ENCODE measurements at regions of chr1 and their contacts with region 1.

Region 1: GRCh38 chr1:45339789-45340570 is at the starts of genes MUTYH and TOE1:
- DNase-seq: peak; percentile 84 to 95 (median 89)
- ATAC-seq: peak; percentile 91
- H3K4me3 ChIP-seq: peak within 1 kb of the TSS; percentile 83
- H3K4me3 Mint-ChIP-seq: peak within 1 kb of the TSS; percentile 95 to 100 (median 99)
- H3K27ac ChIP-seq: peak within 1 kb of the TSS; percentile 99
- H3K27ac Mint-ChIP-seq: peak within 1 kb of the TSS; percentile 96 to 99 (median 99)
- H3K4me1 ChIP-seq: peaks cover 31 to 33% of the 10 kb centered on the region in 2 donors
- H3K4me1 Mint-ChIP-seq: peaks cover 24 to 75% (median 61%) of the 10 kb centered on the region in 7 donors
- H3K27me3 ChIP-seq: no peaks in the 10 kb centered on the region
- H3K27me3 Mint-ChIP-seq: no peaks in the 10 kb centered on the region
- total RNA-seq, gene MUTYH: 56.7 to 85.4 (median 67.7) TPM
- total RNA-seq, gene TOE1: 20.6 to 53.3 (median 25.7) TPM

Region 2: DNA sequence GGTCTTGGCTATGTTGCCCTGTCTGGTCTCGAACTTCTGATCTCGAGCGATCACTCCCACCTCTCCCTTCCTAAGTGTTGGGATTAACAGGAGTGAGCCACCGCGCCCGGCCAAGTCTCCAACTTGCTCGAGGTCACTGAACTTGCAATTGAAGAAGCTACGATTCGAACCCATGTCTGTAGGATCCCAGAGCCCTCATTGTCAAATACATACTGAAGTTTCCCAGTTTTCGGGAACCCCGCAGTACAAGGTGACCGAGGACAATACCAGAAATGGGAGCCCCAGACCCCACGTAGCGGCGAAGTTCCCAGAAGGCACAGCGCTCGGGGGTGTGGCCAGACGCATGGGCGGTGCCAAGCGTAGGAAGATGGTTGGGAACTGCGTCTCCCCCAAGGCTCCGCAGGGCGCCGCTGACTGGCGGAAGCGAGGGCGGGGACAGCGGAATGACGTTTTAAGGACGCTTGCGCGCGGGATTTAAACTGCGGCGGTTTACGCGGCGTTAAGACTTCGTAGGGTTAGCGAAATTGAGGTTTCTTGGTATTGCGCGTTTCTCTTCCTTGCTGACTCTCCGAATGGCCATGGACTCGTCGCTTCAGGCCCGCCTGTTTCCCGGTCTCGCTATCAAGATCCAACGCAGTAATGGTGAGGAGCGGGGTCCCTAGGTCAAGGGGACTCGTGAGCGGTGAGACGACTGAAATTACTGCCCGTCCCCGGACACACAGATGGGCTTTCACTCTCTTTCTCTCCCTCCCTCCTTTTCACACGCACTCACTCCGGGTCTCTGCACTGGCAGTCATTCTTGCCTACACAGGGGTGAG is 600.4 kb before region 1 on chr1 and contains the start of gene KIF2C:
- CTCF ChIA-PET with region 1: no interaction called
- POLR2A ChIA-PET with region 1: no interaction called
- intact Hi-C with region 1: loop called (anchors 1 kb)
- DNase-seq: peak; percentile 87 to 96 (median 94)
- ATAC-seq: peak; percentile 100
- H3K4me3 ChIP-seq: peak within 1 kb of the TSS; percentile 79
- H3K4me3 Mint-ChIP-seq: peak within 1 kb of the TSS; percentile 84 to 99 (median 94)
- H3K27ac ChIP-seq: peak within 1 kb of the TSS; percentile 84
- H3K27ac Mint-ChIP-seq: peak within 1 kb of the TSS; percentile 86 to 97 (median 95)
- H3K4me1 ChIP-seq: peaks cover 5 to 7% of the 10 kb centered on the region in 2 donors
- H3K4me1 Mint-ChIP-seq: peaks cover 9 to 39% (median 19%) of the 10 kb centered on the region in 7 donors
- H3K27me3 ChIP-seq: no peaks in the 10 kb centered on the region
- H3K27me3 Mint-ChIP-seq: no peaks in the 10 kb centered on the region
- total RNA-seq, gene KIF2C: 0.32 to 69.3 (median 1.1) TPM

Region 3: DNA sequence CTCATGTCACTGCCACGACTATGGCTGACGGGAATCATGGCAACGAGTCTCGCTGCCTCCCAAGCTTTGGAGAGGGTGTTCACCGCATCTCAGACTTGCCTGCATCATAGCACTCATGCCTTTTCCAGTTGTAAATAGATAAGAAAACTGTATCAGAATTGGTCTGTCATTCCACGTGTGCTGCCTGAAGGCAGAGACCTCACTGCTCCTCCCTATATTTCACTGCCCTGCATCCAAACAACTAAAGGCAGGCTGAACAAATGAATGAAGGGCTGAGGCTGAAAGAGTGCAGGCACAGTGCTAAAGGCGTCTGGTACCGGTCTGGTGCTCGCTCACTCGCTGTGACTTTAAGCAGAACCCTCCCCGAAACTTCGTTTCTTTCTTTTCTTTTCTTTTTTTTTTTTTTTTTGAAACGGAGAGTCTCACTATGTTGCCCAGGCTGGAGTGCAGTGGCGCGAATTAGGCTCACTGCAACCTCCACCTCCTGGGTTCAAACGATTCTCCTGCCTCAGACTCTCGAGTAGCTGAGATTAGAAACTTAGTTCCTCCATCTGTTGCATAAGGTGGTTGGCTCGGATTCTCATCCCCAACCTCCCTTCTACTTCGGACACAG is 354.1 kb before region 1 on chr1:
- CTCF ChIA-PET with region 1: interaction called, 5 read pairs
- POLR2A ChIA-PET with region 1: interaction called, 6 read pairs
- intact Hi-C with region 1: loop called in 1 of 2 experiments (anchors 1 kb)
- DNase-seq: no peak
- ATAC-seq: no peak
- H3K4me3 ChIP-seq: peak overlapping the region; percentile 77
- H3K4me3 Mint-ChIP-seq: peak overlapping the region; percentile 90 to 100 (median 98)
- H3K27ac ChIP-seq: peak overlapping the region; percentile 68
- H3K27ac Mint-ChIP-seq: peak overlapping the region; percentile 75 to 99 (median 92)
- H3K4me1 ChIP-seq: peaks cover 8 to 13% of the 10 kb centered on the region in 2 donors
- H3K4me1 Mint-ChIP-seq: peaks cover 7 to 39% (median 23%) of the 10 kb centered on the region in 7 donors
- H3K27me3 ChIP-seq: no peaks in the 10 kb centered on the region
- H3K27me3 Mint-ChIP-seq: no peaks in the 10 kb centered on the region

Region 4: DNA sequence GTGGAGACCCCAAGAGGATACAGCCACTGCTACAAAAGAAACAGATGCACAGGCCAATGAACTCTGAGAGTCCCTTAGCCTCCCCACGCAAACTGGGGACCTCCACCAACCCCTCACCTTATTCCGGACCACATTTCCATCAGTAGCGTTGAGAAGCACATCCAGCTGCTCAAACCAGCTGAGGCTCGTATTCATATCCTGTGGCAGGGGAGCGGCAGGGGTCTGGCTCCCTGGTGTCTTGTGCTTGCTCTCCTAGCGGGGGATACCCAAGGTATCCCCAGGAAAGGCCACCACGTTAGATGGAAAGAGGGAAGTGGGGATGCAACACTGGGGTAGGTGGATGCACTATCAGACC is 159.4 kb after region 1 on chr1:
- CTCF ChIA-PET with region 1: interaction called, 26 read pairs
- POLR2A ChIA-PET with region 1: interaction called, 45 read pairs
- intact Hi-C with region 1: loop called (anchors 1 kb)
- DNase-seq: peak in 1 of 9 donors; percentile 17
- ATAC-seq: no peak
- H3K4me3 ChIP-seq: peak overlapping the region; percentile 68
- H3K4me3 Mint-ChIP-seq: peak overlapping the region; percentile 91 to 99 (median 94)
- H3K27ac ChIP-seq: peak overlapping the region; percentile 70
- H3K27ac Mint-ChIP-seq: peak overlapping the region; percentile 87 to 97 (median 92)
- H3K4me1 ChIP-seq: peaks cover 5 to 17% of the 10 kb centered on the region in 2 donors
- H3K4me1 Mint-ChIP-seq: peaks cover 24 to 38% (median 33%) of the 10 kb centered on the region in 7 donors
- H3K27me3 ChIP-seq: no peaks in the 10 kb centered on the region
- H3K27me3 Mint-ChIP-seq: no peaks in the 10 kb centered on the region

Region 5: DNA sequence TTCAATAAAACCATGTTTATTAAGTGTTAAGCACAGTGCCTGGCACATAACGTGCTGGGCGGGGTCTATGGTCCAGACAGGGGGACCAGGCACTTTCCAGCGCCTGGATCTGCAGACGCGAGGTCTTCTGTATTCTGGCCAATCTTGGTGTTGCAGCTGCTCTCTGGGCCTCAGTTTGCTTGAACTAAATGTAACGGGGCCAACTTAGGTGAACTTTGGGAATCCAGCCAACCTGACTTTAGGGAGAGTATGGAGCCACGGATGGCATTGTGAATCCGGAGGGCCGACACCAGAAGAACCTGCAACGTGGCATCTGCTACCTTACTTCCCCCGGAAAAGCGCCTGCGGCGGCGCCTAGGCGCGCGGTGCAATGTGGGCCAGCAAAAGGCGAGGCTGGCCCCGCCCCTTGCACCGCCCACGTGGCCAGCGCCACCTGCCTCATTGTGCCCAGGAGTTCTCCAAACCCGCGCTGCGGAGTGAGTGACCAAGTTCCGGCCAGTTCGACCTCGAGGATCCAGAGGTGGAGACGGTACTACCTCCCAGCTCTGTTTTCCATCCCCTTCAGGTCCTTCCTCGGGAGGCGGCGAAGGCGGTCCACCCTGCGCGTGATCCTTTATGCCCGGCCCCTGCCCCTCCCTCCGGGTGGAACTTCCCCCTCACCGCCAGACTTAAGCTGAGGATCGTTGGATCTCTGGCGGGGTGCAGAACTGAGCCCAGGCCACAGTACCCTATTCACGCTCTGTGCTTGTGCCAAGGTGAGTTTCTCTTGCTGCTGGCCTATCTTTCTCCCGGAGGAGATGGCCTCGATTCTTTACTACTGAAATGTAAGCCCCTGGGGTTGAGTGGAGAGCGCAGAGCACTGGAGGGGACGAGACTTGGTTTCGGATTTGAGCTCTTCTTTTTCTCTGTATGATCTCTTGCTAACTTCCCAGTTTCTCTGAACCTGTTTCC is 210.7 kb after region 1 on chr1 and contains the start of gene AKR1A1:
- CTCF ChIA-PET with region 1: no interaction called
- POLR2A ChIA-PET with region 1: no interaction called
- intact Hi-C with region 1: loop called in 1 of 2 experiments (anchors 1 kb)
- DNase-seq: peak; percentile 79 to 91 (median 88)
- ATAC-seq: peak; percentile 98
- H3K4me3 ChIP-seq: peak within 1 kb of the TSS; percentile 93
- H3K4me3 Mint-ChIP-seq: peak within 1 kb of the TSS; percentile 89 to 99 (median 96)
- H3K27ac ChIP-seq: peak within 1 kb of the TSS; percentile 89
- H3K27ac Mint-ChIP-seq: peak within 1 kb of the TSS; percentile 83 to 98 (median 96)
- H3K4me1 ChIP-seq: peaks cover 12 to 22% of the 10 kb centered on the region in 2 donors
- H3K4me1 Mint-ChIP-seq: peaks cover 18 to 28% (median 22%) of the 10 kb centered on the region in 7 donors
- H3K27me3 ChIP-seq: no peaks in the 10 kb centered on the region
- H3K27me3 Mint-ChIP-seq: no peaks in the 10 kb centered on the region
- total RNA-seq, gene AKR1A1: 47.5 to 155 (median 69.3) TPM

Region 6: GRCh38 chr1:47333922-47334764 is 1994.2 kb after region 1 on chr1:
- CTCF ChIA-PET with region 1: no interaction called
- POLR2A ChIA-PET with region 1: no interaction called
- intact Hi-C with region 1: loop called in 1 of 2 experiments (anchors 5 kb)
- DNase-seq: peak; percentile 63 to 82 (median 77)
- ATAC-seq: peak; percentile 93
- H3K4me3 ChIP-seq: peak overlapping the region; percentile 87
- H3K4me3 Mint-ChIP-seq: peak overlapping the region in 6 of 10 donors; percentile 90 to 94 (median 92)
- H3K27ac ChIP-seq: peak overlapping the region; percentile 92
- H3K27ac Mint-ChIP-seq: peak overlapping the region in 6 of 9 donors; percentile 76 to 94 (median 92)
- H3K4me1 ChIP-seq: peaks cover 6 to 16% of the 10 kb centered on the region in 2 donors
- H3K4me1 Mint-ChIP-seq: peaks cover 12 to 34% (median 22%) of the 10 kb centered on the region in 7 donors
- H3K27me3 ChIP-seq: no peaks in the 10 kb centered on the region
- H3K27me3 Mint-ChIP-seq: no peaks in the 10 kb centered on the region

Measured in naive thymus-derived CD4-positive, alpha-beta T cell (primary cell).